ENCODE measurements at regions of chr1 and their contacts with region 1.

Region 1: GRCh38 chr1:116733476-116734365 is 20.5 kb upstream of the CD2 start:
- DNase-seq: no peak
- H3K4me3 ChIP-seq: no peak overlapping the region
- H3K27ac ChIP-seq: no peak overlapping the region
- H3K4me1 ChIP-seq: no peaks in the 10 kb centered on the region
- H3K27me3 ChIP-seq: peaks cover 21% of the 10 kb centered on the region

Region 2: GRCh38 chr1:116514708-116515525 is 218.8 kb before region 1 on chr1:
- in situ Hi-C with region 1: no loop called
- DNase-seq: no peak
- H3K4me3 ChIP-seq: no peak overlapping the region
- H3K27ac ChIP-seq: no peak overlapping the region
- H3K4me1 ChIP-seq: peaks cover 4% of the 10 kb centered on the region
- H3K27me3 ChIP-seq: no peaks in the 10 kb centered on the region

Region 3: GRCh38 chr1:117051224-117052064 is 317.7 kb after region 1 on chr1:
- in situ Hi-C with region 1: loop called (anchors 5 kb)
- DNase-seq: peak; percentile 46
- H3K4me3 ChIP-seq: peak overlapping the region; percentile 47
- H3K27ac ChIP-seq: 0 out of 2 replicates have a peak overlapping the region, but pooled peaks have one; percentile 21
- H3K4me1 ChIP-seq: no peaks in the 10 kb centered on the region
- H3K27me3 ChIP-seq: no peaks in the 10 kb centered on the region

Measured in GM23248 (cell line).